ENCODE measurements at regions of chr10 and their contacts with region 1.

Region 1: DNA sequence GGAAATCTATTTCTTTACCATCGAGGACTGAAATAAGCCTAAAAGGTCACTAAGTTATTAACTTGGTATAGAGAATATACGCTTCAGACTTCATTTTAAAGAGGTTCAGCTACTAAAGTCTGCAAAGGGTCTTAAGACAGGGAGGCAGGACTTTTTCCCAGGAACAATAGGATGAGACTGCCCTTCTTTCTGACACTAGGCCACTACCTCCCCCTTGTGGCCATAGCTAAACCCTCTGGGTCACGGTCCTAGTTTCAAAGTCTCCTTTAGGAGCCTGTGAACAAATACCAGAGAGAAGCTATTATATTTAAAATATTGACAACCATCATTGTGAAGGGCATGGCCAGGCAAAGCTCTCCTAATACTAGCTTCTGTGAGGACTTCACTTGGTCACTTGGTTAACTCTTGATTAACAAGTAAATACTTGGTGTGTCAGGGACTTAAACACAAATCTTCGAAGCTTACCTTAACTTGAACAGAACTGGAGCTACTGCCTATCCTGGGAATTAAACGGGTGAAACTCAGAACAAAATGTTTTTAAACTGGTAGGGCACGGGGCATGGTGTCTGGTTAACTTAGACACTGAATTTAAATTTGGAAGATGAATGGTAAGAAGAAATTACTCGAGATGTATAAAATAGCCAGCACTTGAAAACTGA is 75.6 kb downstream of the CCDC6 start:
- DNase-seq: peak in 3 of 5 donors; percentile 5 to 14 (median 11)
- H3K4me3 ChIP-seq: no peak overlapping the region
- H3K4me3 Mint-ChIP-seq: no peak overlapping the region
- H3K27ac ChIP-seq: no peak overlapping the region
- H3K27ac Mint-ChIP-seq: peak overlapping the region in 1 of 7 donors; percentile 14
- H3K4me1 ChIP-seq: no peaks in the 10 kb centered on the region
- H3K4me1 Mint-ChIP-seq: peaks cover 18 to 49% (median 34%) of the 10 kb centered on the region in 4 donors
- H3K27me3 ChIP-seq: no peaks in the 10 kb centered on the region
- H3K27me3 Mint-ChIP-seq: no peaks in the 10 kb centered on the region

Region 2: GRCh38 chr10:59814878-59815277 is 15.9 kb before region 1 on chr10:
- CTCF ChIA-PET with region 1: interaction called, 13 read pairs
- POLR2A ChIA-PET with region 1: no interaction called
- intact Hi-C with region 1: no loop called
- DNase-seq: no peak
- H3K4me3 ChIP-seq: no peak overlapping the region
- H3K4me3 Mint-ChIP-seq: no peak overlapping the region
- H3K27ac ChIP-seq: no peak overlapping the region
- H3K27ac Mint-ChIP-seq: peak overlapping the region in 1 of 7 donors; percentile 7
- H3K4me1 ChIP-seq: peaks cover 9% of the 10 kb centered on the region
- H3K4me1 Mint-ChIP-seq: peaks cover 10 to 30% (median 16%) of the 10 kb centered on the region in 4 donors
- H3K27me3 ChIP-seq: no peaks in the 10 kb centered on the region
- H3K27me3 Mint-ChIP-seq: no peaks in the 10 kb centered on the region

Region 3: GRCh38 chr10:59844436-59844835 is 13.7 kb after region 1 on chr10:
- CTCF ChIA-PET with region 1: interaction called, 14 read pairs
- POLR2A ChIA-PET with region 1: no interaction called
- intact Hi-C with region 1: no loop called
- DNase-seq: no peak
- H3K4me3 ChIP-seq: no peak overlapping the region
- H3K4me3 Mint-ChIP-seq: no peak overlapping the region
- H3K27ac ChIP-seq: no peak overlapping the region
- H3K27ac Mint-ChIP-seq: no peak overlapping the region
- H3K4me1 ChIP-seq: peaks cover 6% of the 10 kb centered on the region
- H3K4me1 Mint-ChIP-seq: peaks cover 8 to 12% (median 10%) of the 10 kb centered on the region in 4 donors
- H3K27me3 ChIP-seq: no peaks in the 10 kb centered on the region
- H3K27me3 Mint-ChIP-seq: no peaks in the 10 kb centered on the region